Endothelial cell of umbilical vein (primary cell): ENCODE measurements at regions of chr20 and their contacts with region 1.

Region 1: GRCh38 chr20:31661625-31662371 is 24.1 kb downstream of the COX4I2 start:
- DNase-seq: peak; percentile 75
- H3K4me3 ChIP-seq: no peak overlapping the region
- H3K27ac ChIP-seq: peak overlapping the region; percentile 18
- H3K4me1 ChIP-seq: peaks cover 8% of the 10 kb centered on the region
- H3K27me3 ChIP-seq: no peaks in the 10 kb centered on the region
- CTCF ChIP-seq: peak; percentile 57 to 86
- POLR2A ChIP-seq: peak; percentile 80

Region 2: DNA sequence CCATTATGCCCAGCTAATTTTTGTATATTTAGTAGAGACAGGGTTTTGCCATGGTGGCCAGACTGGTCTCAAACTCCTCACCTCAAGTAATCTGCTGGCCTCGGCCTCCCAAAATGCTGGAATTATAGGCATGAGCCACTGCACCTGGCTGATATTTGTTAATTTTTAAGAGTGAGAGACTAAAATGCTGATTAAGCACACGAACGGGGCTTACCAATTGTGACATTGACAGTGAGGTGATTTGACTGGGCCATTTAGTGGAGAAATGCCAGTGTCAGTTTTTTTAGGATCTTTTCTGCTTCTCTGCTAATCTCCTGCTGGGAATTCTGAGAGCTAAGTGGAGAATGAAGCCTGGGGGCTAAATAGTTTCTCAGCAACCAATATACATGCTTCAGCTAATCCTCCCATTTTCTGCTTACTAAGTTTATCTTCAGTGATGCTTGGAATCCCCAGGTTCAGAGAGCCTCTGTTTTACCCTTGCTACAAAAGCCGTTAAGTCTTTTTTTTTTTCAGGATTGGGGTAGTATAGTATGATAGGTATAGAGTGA is 231.2 kb before region 1 on chr20:
- CTCF ChIA-PET with region 1: no interaction called
- POLR2A ChIA-PET with region 1: no interaction called
- dilution Hi-C with region 1: no loop called
- intact Hi-C with region 1: no loop called
- DNase-seq: no peak
- H3K4me3 ChIP-seq: no peak overlapping the region
- H3K27ac ChIP-seq: no peak overlapping the region
- H3K4me1 ChIP-seq: no peaks in the 10 kb centered on the region
- H3K27me3 ChIP-seq: no peaks in the 10 kb centered on the region
- CTCF ChIP-seq: no peak
- POLR2A ChIP-seq: no peak

Region 3: DNA sequence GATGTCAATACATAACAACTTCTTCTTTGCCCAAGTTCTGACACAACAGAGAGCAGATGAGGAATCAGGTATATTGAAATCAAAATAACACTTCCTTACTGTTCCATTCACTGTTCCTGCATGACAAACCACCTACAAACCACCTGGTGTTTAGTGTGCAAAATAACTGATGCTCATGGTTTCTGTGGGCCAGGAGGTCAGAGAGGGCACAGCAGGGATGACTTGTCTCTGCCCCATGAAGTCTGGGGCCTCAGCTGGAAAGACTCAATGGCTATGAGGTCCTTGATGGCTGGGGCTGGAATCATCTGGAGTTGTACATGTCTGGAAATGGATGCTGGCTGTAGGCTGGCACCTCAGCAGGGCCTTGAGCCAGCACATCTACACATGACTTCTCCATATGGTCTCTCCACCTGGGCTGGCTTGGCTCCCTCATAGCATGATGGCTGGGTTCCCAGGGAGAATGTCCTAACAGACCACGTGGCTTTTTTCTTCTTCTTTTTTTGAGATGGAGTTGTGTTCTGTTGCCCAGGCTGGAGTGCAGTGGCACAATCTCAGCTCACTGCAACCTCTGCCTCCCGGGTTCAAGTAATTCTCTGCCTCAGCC is 31.5 kb before region 1 on chr20:
- CTCF ChIA-PET with region 1: interaction called, 68 read pairs
- POLR2A ChIA-PET with region 1: interaction called, 8 read pairs
- dilution Hi-C with region 1: no loop called
- intact Hi-C with region 1: loop called (anchors 1 kb)
- DNase-seq: no peak
- H3K4me3 ChIP-seq: no peak overlapping the region
- H3K27ac ChIP-seq: no peak overlapping the region
- H3K4me1 ChIP-seq: no peaks in the 10 kb centered on the region
- H3K27me3 ChIP-seq: no peaks in the 10 kb centered on the region
- CTCF ChIP-seq: no peak
- POLR2A ChIP-seq: no peak

Region 4: GRCh38 chr20:31674895-31675827 is 13.4 kb after region 1 on chr20:
- CTCF ChIA-PET with region 1: interaction called, 41 read pairs
- POLR2A ChIA-PET with region 1: interaction called, 7 read pairs
- dilution Hi-C with region 1: no loop called
- intact Hi-C with region 1: loop called (anchors 1 kb)
- DNase-seq: peak; percentile 84
- H3K4me3 ChIP-seq: peak overlapping the region in 1 of 3 experiments; percentile 20
- H3K27ac ChIP-seq: peak overlapping the region; percentile 93
- H3K4me1 ChIP-seq: peaks cover 60% of the 10 kb centered on the region
- H3K27me3 ChIP-seq: no peaks in the 10 kb centered on the region
- CTCF ChIP-seq: no peak
- POLR2A ChIP-seq: peak; percentile 27

Region 5: DNA sequence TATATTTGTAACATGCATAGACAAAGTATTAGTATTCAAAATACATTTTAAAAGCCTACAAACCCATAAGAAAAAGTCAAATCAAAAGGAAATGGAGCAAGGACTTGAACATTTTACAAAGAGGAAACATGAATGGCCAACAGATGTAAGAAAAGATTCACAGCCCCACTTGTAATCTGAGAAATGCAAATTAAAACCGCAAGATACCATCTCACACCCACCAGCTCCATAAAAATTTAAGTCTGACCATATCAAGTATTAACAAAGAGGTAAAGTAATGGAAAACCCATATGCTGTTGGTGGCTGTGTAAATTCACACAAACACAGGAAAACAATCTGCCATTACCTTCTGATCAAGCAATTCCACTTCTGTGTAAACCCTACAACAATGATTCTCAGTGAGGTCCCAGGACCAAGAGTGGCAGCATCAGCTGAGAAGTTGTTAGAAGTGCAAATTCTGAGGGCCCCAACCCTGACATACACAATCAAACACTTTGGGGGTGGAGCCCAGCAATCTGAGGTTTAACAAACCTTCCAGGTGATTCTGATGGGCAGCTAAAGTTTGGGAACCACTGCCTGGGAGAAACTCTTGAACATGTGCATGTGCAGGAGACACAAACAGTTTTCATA is 30.0 kb after region 1 on chr20:
- CTCF ChIA-PET with region 1: interaction called, 24 read pairs
- POLR2A ChIA-PET with region 1: no interaction called
- dilution Hi-C with region 1: no loop called
- intact Hi-C with region 1: no loop called
- DNase-seq: no peak
- H3K4me3 ChIP-seq: no peak overlapping the region
- H3K27ac ChIP-seq: no peak overlapping the region
- H3K4me1 ChIP-seq: peaks cover 26% of the 10 kb centered on the region
- H3K27me3 ChIP-seq: no peaks in the 10 kb centered on the region
- CTCF ChIP-seq: no peak
- POLR2A ChIP-seq: no peak

Region 6: GRCh38 chr20:31704225-31705119 is 42.7 kb after region 1 on chr20:
- CTCF ChIA-PET with region 1: interaction called, 24 read pairs
- POLR2A ChIA-PET with region 1: interaction called, 3 read pairs
- dilution Hi-C with region 1: no loop called
- intact Hi-C with region 1: loop called (anchors 1 kb)
- DNase-seq: peak; percentile 54
- H3K4me3 ChIP-seq: no peak overlapping the region
- H3K27ac ChIP-seq: peak overlapping the region; percentile 77
- H3K4me1 ChIP-seq: peaks cover 30% of the 10 kb centered on the region
- H3K27me3 ChIP-seq: no peaks in the 10 kb centered on the region
- CTCF ChIP-seq: no peak
- POLR2A ChIP-seq: no peak